ENCODE measurements at regions of chr7 and their contacts with region 1.

Region 1: GRCh38 chr7:29749701-29750321 is 56.5 kb upstream of the WIPF3 start:
- DNase-seq: no peak

Region 2: GRCh38 chr7:29574659-29575058 is 175.2 kb before region 1 on chr7:
- intact Hi-C with region 1: no loop called
- DNase-seq: no peak

Region 3: GRCh38 chr7:29921404-29922010 is 171.7 kb after region 1 on chr7:
- intact Hi-C with region 1: loop called (anchors 5 to 10 kb)
- DNase-seq: no peak

Measured in posterior vena cava (tissue), 2 donors.